Activated T-helper 2 cell treated with anti-CD3 and anti-CD28 coated beads, Interferon-gamma antibody, Interleukin-2, Interleukin-4, amounts not matched to agents 10 μg/mL and 5 μg/mL and 100 μg/mL, durations not matched to agents 14 hours and 24 hours and 36 hours (primary cell): ENCODE measurements at regions of chr6 and their contacts with region 1.

Region 1: GRCh38 chr6:90179190-90180169 is 117.2 kb downstream of the BACH2 start:
- DNase-seq: no peak
- H3K4me3 Mint-ChIP-seq: no peak overlapping the region
- H3K27ac Mint-ChIP-seq: no peak overlapping the region
- H3K4me1 Mint-ChIP-seq: peaks cover 67% of the 10 kb centered on the region
- H3K27me3 Mint-ChIP-seq: no peaks in the 10 kb centered on the region

Region 2: DNA sequence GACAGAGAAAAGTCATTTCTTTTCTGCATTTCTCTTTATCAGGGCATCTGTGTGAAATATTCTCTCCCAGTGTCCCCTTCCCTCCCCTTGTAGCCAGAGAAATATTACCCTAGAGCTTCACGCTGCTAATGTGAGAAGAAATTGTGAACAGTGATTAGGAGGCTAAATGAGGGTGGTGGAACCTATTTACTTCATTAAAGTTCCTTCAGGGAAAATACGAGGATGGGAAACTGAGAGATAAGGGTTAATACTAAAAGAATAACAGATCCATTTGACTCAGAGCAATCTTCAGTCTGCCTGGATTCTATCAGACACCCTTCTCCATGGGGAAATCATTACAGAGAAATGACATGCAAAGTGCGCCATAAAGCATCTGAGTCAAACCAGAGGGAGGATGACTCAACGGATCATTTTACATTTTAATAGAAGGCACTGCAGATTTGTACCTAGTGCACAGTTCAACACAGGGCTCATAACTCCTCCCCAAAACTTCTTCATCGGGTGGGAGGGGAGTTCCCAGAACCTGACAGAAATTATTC is 153.9 kb before region 1 on chr6:
- intact Hi-C with region 1: loop called (anchors 5 kb)
- DNase-seq: no peak
- H3K4me3 Mint-ChIP-seq: peak overlapping the region; percentile 72
- H3K27ac Mint-ChIP-seq: peak overlapping the region; percentile 92
- H3K4me1 Mint-ChIP-seq: peaks cover 71% of the 10 kb centered on the region
- H3K27me3 Mint-ChIP-seq: no peaks in the 10 kb centered on the region

Region 3: DNA sequence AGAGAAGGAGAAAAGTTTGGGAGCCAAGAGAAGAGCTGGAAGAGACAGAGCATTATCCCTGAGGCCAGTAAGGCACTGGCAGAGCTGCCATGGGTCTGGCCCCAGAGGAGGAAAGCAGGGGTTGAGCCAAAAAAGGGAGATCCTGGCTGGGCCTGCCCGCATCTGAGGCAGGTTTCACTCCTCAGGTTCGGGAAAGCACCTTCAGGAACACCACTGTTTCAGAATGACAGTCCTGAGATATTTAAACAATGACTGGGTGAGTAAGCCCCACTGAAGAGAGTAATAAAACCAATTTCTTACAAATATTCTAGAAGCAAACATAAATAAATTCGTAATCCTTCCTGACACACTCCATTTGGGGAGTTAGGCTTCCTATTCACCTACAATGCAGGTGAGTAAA is 35.1 kb before region 1 on chr6:
- intact Hi-C with region 1: loop called (anchors 1 kb)
- DNase-seq: no peak
- H3K4me3 Mint-ChIP-seq: peak overlapping the region; percentile 54
- H3K27ac Mint-ChIP-seq: peak overlapping the region; percentile 92
- H3K4me1 Mint-ChIP-seq: peaks cover 68% of the 10 kb centered on the region
- H3K27me3 Mint-ChIP-seq: no peaks in the 10 kb centered on the region

Region 4: DNA sequence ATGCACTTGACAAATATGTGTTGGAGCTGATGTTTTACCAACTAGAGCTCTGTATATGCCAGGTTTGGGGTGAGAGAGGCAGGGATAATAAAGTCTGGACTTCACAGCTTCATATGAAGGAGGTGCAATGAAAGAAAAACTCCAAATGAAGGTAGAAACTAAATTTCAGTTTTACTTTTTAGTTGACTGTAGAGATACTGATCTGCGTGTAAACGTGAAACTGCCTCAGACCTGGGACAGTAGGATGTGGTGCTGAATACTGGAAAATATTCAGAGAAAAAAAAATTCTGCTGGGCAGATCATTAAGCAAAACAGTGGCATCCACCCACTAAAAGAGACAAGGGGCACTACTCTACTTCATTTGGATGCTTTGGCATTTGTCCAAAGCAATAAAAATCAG is 22.7 kb after region 1 on chr6:
- intact Hi-C with region 1: loop called (anchors 1 kb)
- DNase-seq: no peak
- H3K4me3 Mint-ChIP-seq: peak overlapping the region; percentile 50
- H3K27ac Mint-ChIP-seq: peak overlapping the region; percentile 52
- H3K4me1 Mint-ChIP-seq: peaks cover 37% of the 10 kb centered on the region
- H3K27me3 Mint-ChIP-seq: no peaks in the 10 kb centered on the region

Region 5: GRCh38 chr6:90230548-90231215 is 51.2 kb after region 1 on chr6:
- intact Hi-C with region 1: loop called (anchors 5 kb)
- DNase-seq: no peak
- H3K4me3 Mint-ChIP-seq: peak overlapping the region; percentile 7
- H3K27ac Mint-ChIP-seq: peak overlapping the region; percentile 33
- H3K4me1 Mint-ChIP-seq: peaks cover 81% of the 10 kb centered on the region
- H3K27me3 Mint-ChIP-seq: no peaks in the 10 kb centered on the region

Region 6: GRCh38 chr6:90478789-90479602 is 299.5 kb after region 1 on chr6:
- intact Hi-C with region 1: loop called (anchors 5 kb)
- DNase-seq: peak; percentile 75
- H3K4me3 Mint-ChIP-seq: peak overlapping the region; percentile 17
- H3K27ac Mint-ChIP-seq: peak overlapping the region; percentile 67
- H3K4me1 Mint-ChIP-seq: peaks cover 58% of the 10 kb centered on the region
- H3K27me3 Mint-ChIP-seq: no peaks in the 10 kb centered on the region